ENCODE measurements at regions of chr19 and their contacts with region 1.

Region 1: DNA sequence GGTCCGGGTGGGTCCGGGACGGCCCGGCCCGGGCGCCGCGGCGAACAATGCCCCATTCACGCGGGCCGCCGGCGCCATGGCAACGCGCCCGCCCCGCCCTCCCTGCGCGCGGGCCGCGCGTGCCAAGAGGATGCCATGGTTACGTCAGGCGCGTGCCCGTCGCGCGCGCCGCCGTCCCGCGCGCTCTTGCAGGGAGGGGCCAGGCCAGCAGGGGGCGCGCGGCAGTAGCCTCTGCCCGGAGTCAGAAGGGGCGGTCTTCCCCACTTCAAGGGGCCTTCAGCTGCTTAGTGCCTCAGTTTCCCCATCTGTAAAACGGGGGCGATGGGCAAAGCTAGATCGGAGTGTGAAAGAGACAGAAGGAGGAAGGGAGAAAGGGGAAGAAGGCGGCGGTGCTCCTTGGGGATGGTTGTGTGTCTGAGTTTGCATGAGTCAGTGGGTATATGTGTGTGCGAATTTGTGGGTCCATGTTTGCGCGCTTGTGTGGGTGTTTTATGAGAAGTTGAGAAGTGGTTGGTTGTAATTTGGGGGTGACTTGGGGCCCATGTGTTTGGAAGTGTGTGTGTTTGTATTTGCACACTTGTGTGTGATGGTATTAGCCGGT is 11.6 kb upstream of the NFIX start:
- DNase-seq: peak; percentile 89
- ATAC-seq: peak; percentile 86

Region 2: GRCh38 chr19:12703046-12703445 is 280.6 kb before region 1 on chr19:
- intact Hi-C with region 1: no loop called
- DNase-seq: no peak
- ATAC-seq: no peak

Region 3: GRCh38 chr19:13033819-13034611 is 50.4 kb after region 1 on chr19:
- intact Hi-C with region 1: no loop called
- DNase-seq: peak; percentile 90
- ATAC-seq: peak; percentile 63

Region 4: DNA sequence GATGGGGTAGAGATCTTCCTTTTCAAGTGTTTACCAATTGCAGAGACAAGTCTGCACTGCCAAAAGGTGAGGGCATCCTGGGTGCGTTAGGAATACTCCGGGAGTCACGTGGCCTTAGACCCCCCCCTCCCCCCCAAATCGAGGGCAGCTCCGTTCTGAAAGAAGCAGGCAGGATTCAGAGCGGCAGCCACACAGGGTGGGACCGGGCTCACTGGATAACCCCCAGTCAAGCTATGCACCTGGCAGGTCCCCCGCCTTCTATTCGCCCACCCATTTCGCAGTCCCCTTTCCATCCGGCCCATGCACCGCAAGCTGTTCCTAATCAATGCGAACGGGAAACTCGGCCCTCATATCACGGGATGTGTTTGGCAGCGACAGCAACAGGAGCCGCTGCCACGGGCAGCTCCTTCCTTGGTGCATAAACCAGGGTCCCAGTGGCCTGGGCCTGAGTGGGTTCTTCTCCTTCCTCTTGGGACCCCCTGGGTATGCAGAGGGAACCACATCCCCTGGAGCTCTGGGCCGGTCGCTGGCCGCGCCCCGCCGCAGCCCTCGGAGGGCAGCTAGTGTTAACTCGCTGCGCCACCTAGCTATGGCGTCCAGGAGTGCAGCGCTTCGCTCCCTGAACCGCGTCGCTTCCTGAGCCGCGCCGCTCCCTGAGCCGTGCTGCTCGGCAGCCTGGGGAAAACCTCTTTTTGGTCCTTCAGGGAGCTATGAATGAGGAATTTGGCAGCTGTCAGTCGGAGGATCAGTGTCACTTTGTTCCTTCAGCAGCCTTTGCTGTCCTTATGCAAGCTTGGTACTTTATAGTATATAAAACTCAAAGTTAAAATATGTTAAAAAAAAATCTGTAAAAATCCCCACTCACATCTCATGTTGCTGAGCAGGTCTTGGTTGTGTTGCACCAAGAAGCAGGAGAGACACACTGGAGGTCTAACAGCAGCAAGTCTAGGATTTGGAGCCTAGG is 77.6 kb after region 1 on chr19:
- intact Hi-C with region 1: no loop called
- DNase-seq: peak; percentile 93
- ATAC-seq: peak; percentile 77

Region 5: DNA sequence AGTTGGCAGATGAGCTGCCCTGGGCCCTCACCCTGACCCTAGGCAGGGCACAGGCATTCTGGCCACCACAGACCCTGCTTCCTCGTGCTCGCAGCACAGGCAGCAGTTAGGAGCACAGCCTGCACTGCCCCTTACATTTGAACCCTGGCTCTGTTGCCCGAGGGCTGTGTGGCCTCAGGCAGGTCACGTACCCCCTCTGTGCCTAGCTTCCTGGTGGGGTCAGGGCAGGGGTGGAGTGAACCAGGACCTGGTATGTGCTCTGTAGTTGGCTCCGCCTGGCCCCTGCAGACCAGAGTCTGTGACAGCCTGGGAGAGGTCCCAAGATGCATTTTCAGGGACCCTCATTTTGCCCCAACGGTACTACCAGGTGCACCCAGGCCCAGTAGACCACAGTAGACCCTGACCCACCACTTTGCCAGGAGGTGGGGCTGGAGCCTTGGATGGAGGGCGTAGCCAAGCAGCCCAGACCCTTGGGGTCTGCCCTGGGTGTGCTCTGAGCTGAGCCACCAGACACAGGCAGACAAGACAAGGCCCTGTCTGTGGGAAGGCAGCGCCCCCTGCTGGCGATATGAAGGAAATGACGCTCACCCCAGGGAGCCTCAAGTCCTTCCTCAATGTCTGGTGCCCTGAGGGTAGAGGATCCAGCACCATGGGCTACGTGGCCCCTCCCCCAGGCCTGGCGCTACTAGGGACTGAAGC is 109.9 kb after region 1 on chr19:
- intact Hi-C with region 1: loop called (anchors 2 kb)
- DNase-seq: peak; percentile 89
- ATAC-seq: peak; percentile 63